Activated T-helper 1 cell treated with anti-CD3 and anti-CD28 coated beads, Interleukin-12 subunit alpha, Interleukin-12 subunit beta, Interleukin-2, Interleukin-4 antibody, amounts not matched to agents 30 ng/mL and 10 ng/mL and 1 ng/mL, durations not matched to agents 14 hours and 24 hours and 36 hours (primary cell): ENCODE measurements at regions of chr3 and their contacts with region 1.

Region 1: GRCh38 chr3:188400494-188401243 is 246.7 kb downstream of the LPP start:
- DNase-seq: peak; percentile 22
- H3K4me3 Mint-ChIP-seq: no peak overlapping the region
- H3K27ac Mint-ChIP-seq: peak overlapping the region; percentile 63
- H3K4me1 Mint-ChIP-seq: peaks cover 73% of the 10 kb centered on the region
- H3K27me3 Mint-ChIP-seq: peaks cover 4% of the 10 kb centered on the region

Region 2: GRCh38 chr3:188154014-188154808 is 246.5 kb before region 1 on chr3 and contains the start of gene LPP:
- intact Hi-C with region 1: loop called (anchors 5 kb)
- DNase-seq: peak; percentile 90
- H3K4me3 Mint-ChIP-seq: peak within 1 kb of the TSS; percentile 89
- H3K27ac Mint-ChIP-seq: peak within 1 kb of the TSS; percentile 87
- H3K4me1 Mint-ChIP-seq: peaks cover 71% of the 10 kb centered on the region
- H3K27me3 Mint-ChIP-seq: no peaks in the 10 kb centered on the region
- total RNA-seq, gene LPP: 38.2 and 46.4 TPM in 2 replicates

Region 3: DNA sequence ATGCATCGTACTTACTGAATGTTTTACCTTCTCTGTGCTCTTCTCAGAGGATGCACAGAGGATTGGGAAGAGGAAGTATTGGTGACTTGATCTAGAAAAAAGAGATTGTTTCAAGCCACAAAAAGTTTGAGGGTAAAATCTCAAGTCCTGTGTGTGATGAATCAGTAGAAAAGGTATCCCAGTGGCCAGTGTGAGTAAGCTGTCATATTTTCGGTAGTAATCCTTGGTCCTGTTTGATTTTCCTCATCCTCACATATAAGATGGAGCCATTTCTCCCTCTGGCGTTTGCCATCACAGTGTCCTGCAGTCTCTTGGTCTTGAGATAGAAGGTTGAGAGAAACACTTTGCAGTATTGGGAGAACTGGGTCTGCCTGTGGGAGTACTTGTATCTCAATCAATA is 79.9 kb before region 1 on chr3:
- intact Hi-C with region 1: loop called (anchors 5 kb)
- DNase-seq: no peak
- H3K4me3 Mint-ChIP-seq: no peak overlapping the region
- H3K27ac Mint-ChIP-seq: no peak overlapping the region
- H3K4me1 Mint-ChIP-seq: peaks cover 49% of the 10 kb centered on the region
- H3K27me3 Mint-ChIP-seq: peaks cover 1% of the 10 kb centered on the region

Region 4: DNA sequence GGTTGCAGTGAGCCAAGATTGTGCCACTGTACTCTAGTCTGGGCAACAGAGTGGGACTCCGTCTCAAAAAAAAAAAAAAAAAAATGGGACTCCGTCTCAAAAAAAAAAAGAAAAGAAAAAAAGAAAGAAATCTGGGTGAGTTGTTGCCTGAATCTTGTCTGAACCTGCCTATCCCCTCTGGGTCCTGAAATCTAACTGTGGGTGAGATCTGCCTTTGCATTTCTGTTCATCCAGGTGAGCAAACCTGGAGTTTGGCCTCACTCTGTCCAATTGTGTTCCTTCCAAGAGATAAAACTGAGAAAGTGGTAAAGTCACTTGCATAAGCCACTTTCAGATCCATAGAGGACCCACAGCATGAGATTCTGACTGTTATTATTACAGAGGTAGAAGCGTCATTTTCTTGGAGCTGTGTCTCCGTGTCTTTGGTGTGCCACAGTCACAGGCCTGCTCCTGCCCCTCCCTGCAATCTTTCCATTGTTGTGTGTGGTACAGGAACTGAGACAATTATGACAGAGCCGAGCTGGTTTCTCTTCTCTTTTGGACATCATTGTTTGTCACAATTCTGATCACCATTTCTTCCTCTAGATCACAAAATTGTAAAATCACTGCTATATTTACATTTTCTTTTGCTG is 10.8 kb before region 1 on chr3:
- intact Hi-C with region 1: loop called (anchors 1 kb)
- DNase-seq: peak; percentile 33
- H3K4me3 Mint-ChIP-seq: peak overlapping the region; percentile 25
- H3K27ac Mint-ChIP-seq: peak overlapping the region; percentile 86
- H3K4me1 Mint-ChIP-seq: peaks cover 44% of the 10 kb centered on the region
- H3K27me3 Mint-ChIP-seq: peaks cover 1% of the 10 kb centered on the region

Region 5: DNA sequence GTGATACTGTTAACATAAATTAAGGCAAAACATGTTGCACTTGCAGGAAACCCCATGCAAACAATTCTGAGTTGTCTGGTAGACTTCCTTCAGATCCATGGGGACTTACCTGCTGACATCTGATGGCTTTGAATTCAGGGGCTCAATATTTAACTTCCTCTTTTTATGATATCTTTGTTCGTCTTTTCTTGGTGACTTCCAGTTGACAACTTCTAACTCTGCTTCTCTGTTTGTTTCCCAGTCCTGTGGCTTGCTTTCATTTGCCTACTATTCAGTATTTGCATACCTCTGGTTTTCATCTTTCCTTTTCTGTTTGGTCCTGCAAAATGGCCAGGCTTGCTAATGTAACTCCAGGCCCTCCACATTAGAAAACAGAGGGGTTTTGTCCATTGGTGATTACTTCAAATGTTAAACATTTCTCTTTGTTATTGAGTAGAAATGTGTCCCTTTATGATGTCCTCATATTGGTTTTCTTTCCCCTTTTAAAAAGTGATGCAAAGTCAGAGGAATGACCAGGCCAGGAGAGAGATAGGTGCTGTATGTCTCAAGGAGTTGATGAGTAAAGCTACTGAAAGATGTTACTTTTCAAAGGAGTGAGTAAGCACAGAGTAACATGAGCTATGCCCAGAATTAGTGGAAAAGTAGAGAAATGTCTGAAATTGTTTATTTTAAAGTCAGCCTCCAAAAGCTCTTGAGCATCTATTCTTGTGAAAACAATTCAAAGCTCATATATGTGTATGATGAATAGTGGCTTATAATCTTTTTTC is 89.2 kb after region 1 on chr3:
- intact Hi-C with region 1: no loop called
- DNase-seq: no peak
- H3K4me3 Mint-ChIP-seq: no peak overlapping the region
- H3K27ac Mint-ChIP-seq: no peak overlapping the region
- H3K4me1 Mint-ChIP-seq: peaks cover 10% of the 10 kb centered on the region
- H3K27me3 Mint-ChIP-seq: no peaks in the 10 kb centered on the region

Region 6: GRCh38 chr3:188584162-188584529 is 183.5 kb after region 1 on chr3:
- intact Hi-C with region 1: loop called (anchors 2 kb)
- DNase-seq: no peak
- H3K4me3 Mint-ChIP-seq: no peak overlapping the region
- H3K27ac Mint-ChIP-seq: no peak overlapping the region
- H3K4me1 Mint-ChIP-seq: no peaks in the 10 kb centered on the region
- H3K27me3 Mint-ChIP-seq: no peaks in the 10 kb centered on the region

Region 7: DNA sequence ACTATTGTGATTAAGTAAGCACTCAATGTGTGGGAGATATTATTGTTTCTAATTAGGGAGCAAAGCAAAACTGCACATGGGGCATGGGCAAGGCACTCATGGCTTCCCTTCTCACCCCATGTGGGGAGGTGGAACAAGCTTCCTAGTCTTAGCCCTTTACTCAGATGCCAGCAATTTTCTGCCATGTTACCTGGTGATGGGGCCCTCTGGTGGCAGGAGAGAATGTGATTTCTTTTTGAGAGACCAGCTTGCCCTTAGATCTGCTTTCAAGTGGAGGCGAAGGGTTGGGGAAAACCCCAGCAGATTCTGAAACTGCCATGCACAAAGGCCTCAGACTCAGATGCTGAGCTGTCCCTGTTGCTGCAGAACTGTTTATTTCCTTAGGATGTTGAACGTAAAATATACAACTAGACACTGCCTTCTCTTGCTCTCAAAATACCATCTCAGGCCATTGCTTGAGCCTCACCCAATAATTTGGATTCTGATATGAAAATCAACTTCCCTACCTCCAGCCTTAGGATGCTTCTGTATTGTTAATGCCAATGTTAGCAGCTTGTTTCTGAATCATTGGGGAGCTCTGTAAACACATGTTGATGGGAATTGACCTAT is 640.9 kb after region 1 on chr3:
- intact Hi-C with region 1: loop called (anchors 5 kb)
- DNase-seq: peak; percentile 75
- H3K4me3 Mint-ChIP-seq: no peak overlapping the region
- H3K27ac Mint-ChIP-seq: no peak overlapping the region
- H3K4me1 Mint-ChIP-seq: peaks cover 56% of the 10 kb centered on the region
- H3K27me3 Mint-ChIP-seq: peaks cover 4% of the 10 kb centered on the region